Posterior cingulate gyrus (tissue), 11 donors: ENCODE measurements at regions of chr7 and their contacts with region 1.

Region 1: GRCh38 chr7:8217200-8218068 is 44.5 kb downstream of the ICA1 start:
- DNase-seq: no peak

Region 2: GRCh38 chr7:7595451-7595850 is 622.0 kb before region 1 on chr7:
- intact Hi-C with region 1: loop called (anchors 2 kb)
- DNase-seq: no peak

Region 3: GRCh38 chr7:7681179-7681935 is 536.1 kb before region 1 on chr7:
- intact Hi-C with region 1: loop called (anchors 2 kb)
- DNase-seq: peak in 2 of 10 donors; percentile 21 to 37

Region 4: DNA sequence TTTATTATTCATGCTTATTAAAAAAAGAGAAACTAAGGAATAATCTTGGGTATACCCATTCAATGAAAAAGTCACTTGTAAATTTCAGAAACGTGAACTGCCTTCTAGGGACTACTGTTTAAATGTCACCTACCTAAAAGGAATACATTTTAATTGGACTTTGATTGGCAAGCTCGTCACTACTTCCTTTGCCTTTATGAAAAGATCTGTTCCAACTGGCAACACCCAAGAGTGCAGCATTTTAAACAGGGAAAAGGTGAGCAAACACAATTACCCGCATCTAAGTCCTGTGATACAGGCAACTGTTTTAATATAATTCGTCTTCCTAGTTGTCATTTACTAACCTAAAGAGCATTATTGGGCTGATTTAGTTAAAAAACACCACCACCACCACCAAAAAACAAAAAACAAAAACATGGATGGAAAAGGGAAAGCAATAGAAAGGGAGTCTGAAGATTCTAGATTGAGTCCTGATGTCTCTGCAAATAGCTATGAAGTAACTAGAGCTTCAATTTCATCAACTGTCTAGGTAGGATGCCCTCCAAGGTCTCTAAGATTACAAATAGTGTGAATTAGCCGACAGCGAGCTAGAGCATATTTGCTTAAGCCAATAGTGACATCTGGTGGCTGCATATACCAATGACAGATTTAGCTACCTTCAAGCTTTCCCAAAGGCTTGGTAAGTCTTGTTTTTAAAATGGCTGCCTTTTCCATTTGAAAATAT is 78.4 kb after region 1 on chr7:
- intact Hi-C with region 1: loop called (anchors 5 kb)
- DNase-seq: peak in 1 of 10 donors; percentile 16